ENCODE measurements at regions of chr6 and their contacts with region 1.

Region 1: GRCh38 chr6:36131511-36132245 is 1.4 kb downstream of the MAPK13 start:
- DNase-seq: peak; percentile 78
- ATAC-seq: peak; percentile 79
- H3K4me3 Mint-ChIP-seq: peak overlapping the region; percentile 88
- H3K27ac Mint-ChIP-seq: peak overlapping the region; percentile 96
- H3K4me1 Mint-ChIP-seq: peaks cover 50% of the 10 kb centered on the region
- H3K27me3 Mint-ChIP-seq: no peaks in the 10 kb centered on the region
- CTCF ChIP-seq: no peak

Region 2: GRCh38 chr6:36196880-36197548 is 65.3 kb after region 1 on chr6:
- CTCF ChIA-PET with region 1: interaction called, 10 read pairs
- POLR2A ChIA-PET with region 1: interaction called, 25 read pairs
- intact Hi-C with region 1: loop called (anchors 2 kb)
- DNase-seq: peak; percentile 100
- ATAC-seq: peak; percentile 96
- H3K4me3 Mint-ChIP-seq: peak overlapping the region; percentile 87
- H3K27ac Mint-ChIP-seq: peak overlapping the region; percentile 94
- H3K4me1 Mint-ChIP-seq: peaks cover 56% of the 10 kb centered on the region
- H3K27me3 Mint-ChIP-seq: no peaks in the 10 kb centered on the region
- CTCF ChIP-seq: no peak

Measured in activated CD8-positive, alpha-beta T cell treated with anti-CD3 and anti-CD28 coated beads for 36 hours (primary cell).